ENCODE measurements at regions of chr17 and their contacts with region 1.

Region 1: GRCh38 chr17:7862692-7863437 is 5.1 kb downstream of the CYB5D1 start:
- DNase-seq: peak; percentile 80
- H3K4me3 ChIP-seq: no peak overlapping the region
- H3K27ac ChIP-seq: no peak overlapping the region
- H3K4me1 ChIP-seq: peaks cover 12% of the 10 kb centered on the region
- H3K27me3 ChIP-seq: no peaks in the 10 kb centered on the region
- CTCF ChIP-seq: peak; percentile 74

Region 2: DNA sequence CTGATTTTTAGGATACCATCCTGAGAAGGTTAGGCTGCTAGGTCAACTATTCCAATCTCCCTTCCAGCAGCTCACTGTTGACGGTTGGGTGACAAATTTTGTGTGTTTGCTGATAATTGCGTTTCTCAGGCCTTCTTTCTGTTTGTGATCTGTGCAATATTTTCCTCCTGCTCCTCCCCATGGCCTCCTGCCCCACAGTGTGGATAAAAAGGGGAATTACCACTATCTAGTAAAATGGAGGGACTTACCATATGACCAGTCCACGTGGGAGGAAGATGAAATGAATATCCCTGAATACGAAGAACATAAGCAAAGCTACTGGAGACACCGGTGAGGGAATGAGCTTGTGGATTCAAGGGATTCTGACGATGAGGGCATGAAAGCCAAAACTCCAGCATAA is 34.9 kb after region 1 on chr17:
- CTCF ChIA-PET with region 1: interaction called, 3 read pairs
- POLR2A ChIA-PET with region 1: no interaction called
- intact Hi-C with region 1: loop called (anchors 5 kb)
- DNase-seq: peak; percentile 60
- H3K4me3 ChIP-seq: no peak overlapping the region
- H3K27ac ChIP-seq: no peak overlapping the region
- H3K4me1 ChIP-seq: no peaks in the 10 kb centered on the region
- H3K27me3 ChIP-seq: no peaks in the 10 kb centered on the region
- CTCF ChIP-seq: peak; percentile 55

Region 3: DNA sequence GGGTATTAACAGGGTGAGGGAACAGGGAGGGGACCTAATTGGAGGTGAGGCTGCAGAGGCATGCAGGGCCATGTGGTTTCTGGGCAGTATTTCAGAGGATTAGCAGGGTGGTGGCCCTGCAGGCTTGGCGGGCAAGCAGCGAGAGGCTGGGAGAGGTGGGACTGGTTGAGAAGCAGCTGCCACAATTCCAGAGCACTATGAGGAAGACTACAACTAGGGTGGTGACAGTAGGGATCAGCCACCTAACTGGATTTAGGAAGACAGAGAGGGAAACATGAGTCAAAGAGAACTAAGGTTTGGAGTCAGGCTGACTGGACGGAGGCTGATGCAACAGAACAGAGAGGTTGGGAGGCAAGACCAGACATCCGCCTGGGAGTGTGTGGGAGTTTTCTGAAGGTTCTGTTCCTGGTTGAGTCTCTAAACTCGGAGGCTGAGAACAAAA is 243.1 kb after region 1 on chr17:
- CTCF ChIA-PET with region 1: no interaction called
- POLR2A ChIA-PET with region 1: interaction called, 19 read pairs
- intact Hi-C with region 1: no loop called
- DNase-seq: no peak
- H3K4me3 ChIP-seq: no peak overlapping the region
- H3K27ac ChIP-seq: no peak overlapping the region
- H3K4me1 ChIP-seq: peaks cover 5% of the 10 kb centered on the region
- H3K27me3 ChIP-seq: no peaks in the 10 kb centered on the region
- CTCF ChIP-seq: no peak

Measured in A673 (cell line).